Uterus (tissue), 4 donors: ENCODE measurements at regions of chr20 and their contacts with region 1.

Region 1: GRCh38 chr20:45765980-45766379 is 25.7 kb downstream of the WFDC3 start:
- DNase-seq: no peak
- H3K4me3 ChIP-seq: no peak overlapping the region
- H3K27ac ChIP-seq: no peak overlapping the region
- H3K4me1 ChIP-seq: no peaks in the 10 kb centered on the region
- H3K27me3 ChIP-seq: no peaks in the 10 kb centered on the region
- CTCF ChIP-seq: no peak
- POLR2A ChIP-seq: no peak

Region 2: GRCh38 chr20:45311589-45312211 is 454.3 kb before region 1 on chr20:
- intact Hi-C with region 1: loop called (anchors 10 kb)
- DNase-seq: peak; percentile 28 to 31
- H3K4me3 ChIP-seq: no peak overlapping the region
- H3K27ac ChIP-seq: no peak overlapping the region
- H3K4me1 ChIP-seq: peaks cover 0 to under 1% of the 10 kb centered on the region in 2 donors
- H3K27me3 ChIP-seq: peaks cover 0 to 11% of the 10 kb centered on the region in 2 donors
- CTCF ChIP-seq: peak; percentile 54 to 64 (median 59)
- POLR2A ChIP-seq: no peak

Region 3: DNA sequence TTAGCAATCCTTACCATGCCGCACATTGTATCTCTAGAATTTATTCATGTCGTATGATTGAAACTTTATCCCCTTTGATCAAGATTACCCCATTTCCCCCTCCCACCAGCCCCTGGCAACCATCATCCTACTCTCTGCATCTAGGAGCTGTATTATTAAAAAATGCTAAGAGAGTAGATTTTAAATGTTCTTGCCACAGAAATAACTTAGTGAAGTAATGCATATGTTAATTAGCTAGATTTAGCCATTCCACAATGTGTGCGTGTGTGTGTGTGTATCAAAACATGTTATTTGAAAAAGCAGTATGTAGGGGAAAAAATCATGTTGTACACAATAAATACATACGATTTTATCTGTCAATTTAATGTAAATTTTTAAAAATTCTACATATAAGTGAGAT is 238.7 kb before region 1 on chr20:
- intact Hi-C with region 1: no loop called
- DNase-seq: no peak
- H3K4me3 ChIP-seq: no peak overlapping the region
- H3K27ac ChIP-seq: no peak overlapping the region
- H3K4me1 ChIP-seq: no peaks in the 10 kb centered on the region
- H3K27me3 ChIP-seq: no peaks in the 10 kb centered on the region
- CTCF ChIP-seq: no peak
- POLR2A ChIP-seq: no peak